ENCODE measurements at regions of chr19 and their contacts with region 1.

Region 1: DNA sequence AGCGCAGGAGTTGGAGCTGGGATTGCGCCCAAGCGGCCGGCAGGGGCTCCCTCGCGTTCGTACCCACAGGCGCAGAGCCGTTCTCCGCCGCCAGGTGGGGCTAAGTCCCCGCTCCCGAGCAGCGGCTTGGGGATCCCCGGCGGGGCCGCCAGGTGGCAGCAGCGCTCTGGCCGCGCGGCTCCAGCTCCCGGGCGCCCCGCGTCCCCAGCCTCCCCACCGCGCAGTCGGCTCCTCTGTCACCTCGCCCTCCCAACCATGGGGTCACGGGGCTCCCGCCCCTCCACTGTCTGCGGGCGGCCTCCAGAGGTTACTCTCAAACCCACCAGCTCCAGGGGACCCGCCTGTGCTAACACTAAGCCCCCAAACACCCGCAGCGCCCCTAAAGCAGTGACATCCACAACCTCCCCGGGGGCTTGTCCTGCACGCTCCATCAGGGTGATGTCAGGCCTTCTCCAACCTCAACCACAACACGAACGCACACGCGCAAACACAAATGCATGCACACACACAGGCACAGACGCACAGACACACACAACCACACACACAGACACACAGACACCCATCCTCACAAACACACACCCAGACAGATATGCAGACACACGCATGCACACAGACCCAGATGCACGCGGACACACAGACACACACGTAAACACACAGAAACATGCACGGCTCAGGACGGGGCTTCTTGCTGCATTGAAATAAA is 18.4 kb upstream of the KCTD15 start:
- DNase-seq: peak; percentile 94
- ATAC-seq: peak; percentile 90

Region 2: GRCh38 chr19:33612928-33613619 is 165.2 kb before region 1 on chr19:
- intact Hi-C with region 1: no loop called
- DNase-seq: no peak
- ATAC-seq: no peak

Region 3: DNA sequence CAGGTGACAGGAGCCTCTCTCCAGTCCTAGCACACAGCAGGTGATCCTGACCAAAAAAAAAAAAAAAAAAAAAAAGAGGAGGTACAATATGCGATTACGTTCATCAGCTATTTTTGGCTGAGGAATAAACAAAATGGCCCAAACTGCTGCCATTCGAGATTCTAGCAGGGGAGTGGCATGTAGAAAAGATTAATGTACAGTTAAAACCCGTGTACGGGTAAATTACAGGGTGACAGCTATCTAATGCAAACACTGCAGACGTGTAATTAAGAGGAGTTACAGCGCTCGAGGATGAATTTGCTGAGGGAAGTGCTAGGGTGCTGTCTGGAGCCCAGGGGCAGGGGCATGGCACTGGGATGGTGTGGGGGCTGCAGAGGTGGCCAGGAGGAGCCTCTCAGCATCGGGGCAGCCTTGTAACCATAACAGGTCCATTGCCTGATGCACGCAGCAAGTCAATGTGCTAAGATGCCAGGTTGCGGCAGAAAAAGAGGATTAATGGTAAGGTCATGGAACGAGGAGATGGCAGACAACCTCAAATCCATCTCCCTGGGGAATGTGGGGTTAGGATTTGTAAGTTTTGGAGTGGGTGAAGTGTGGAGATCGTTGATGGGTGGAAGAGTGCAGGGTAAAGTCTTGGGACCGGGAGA is 139.1 kb before region 1 on chr19:
- intact Hi-C with region 1: no loop called
- DNase-seq: no peak
- ATAC-seq: no peak

Region 4: DNA sequence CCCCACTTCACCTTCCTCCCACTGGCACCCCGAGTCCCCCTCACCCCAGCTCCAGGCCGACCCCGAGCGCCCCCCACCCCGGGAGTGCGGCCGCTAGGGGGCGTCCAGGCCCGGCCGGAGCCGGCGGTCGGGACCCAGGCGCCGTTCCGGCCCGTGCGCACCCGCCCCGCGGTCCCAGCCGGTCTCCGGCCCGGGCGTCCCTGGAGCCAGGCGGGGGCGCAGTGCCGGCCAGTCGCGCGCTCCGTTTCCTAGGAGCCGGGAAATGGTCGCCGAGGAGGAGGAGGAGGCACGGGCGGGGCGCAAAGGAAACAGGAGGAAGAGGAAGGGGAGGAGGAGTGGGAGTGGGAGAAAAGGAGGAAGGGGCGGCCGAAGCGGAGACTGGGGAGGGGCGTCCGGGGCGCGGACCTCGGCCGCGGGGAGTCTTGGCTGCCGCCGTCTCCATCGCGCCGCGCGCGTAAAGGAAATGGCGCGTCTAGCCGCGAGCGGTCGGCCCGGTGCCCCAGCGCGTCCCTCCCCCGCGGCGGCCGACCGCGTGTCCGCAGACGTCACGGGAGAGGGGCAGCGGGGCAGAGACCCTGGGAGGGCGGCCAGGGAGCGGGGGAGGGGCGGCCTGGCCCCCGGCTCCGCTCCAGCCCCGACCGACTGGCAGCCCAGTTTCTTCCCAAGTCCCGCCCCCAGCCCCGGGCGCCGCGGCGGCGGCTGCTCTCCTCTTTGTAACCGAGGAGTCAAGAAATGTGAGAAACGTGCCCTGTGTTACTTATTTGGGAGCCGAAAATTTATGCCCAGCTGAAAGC is 17.3 kb after region 1 on chr19:
- intact Hi-C with region 1: no loop called
- DNase-seq: peak; percentile 94
- ATAC-seq: peak; percentile 88

Region 5: GRCh38 chr19:33998739-33999345 is 220.6 kb after region 1 on chr19:
- intact Hi-C with region 1: loop called (anchors 2 kb)
- DNase-seq: no peak
- ATAC-seq: no peak

Region 6: GRCh38 chr19:34096020-34096915 is 318.0 kb after region 1 on chr19:
- intact Hi-C with region 1: loop called (anchors 1 kb)
- DNase-seq: no peak
- ATAC-seq: no peak

Region 7: GRCh38 chr19:34145741-34146202 is 367.5 kb after region 1 on chr19:
- intact Hi-C with region 1: loop called (anchors 1 kb)
- DNase-seq: no peak
- ATAC-seq: no peak